ENCODE measurements at regions of chr10 and their contacts with region 1.

Region 1: GRCh38 chr10:24518981-24519597 is 204.6 kb downstream of the ARHGAP21 start:
- DNase-seq: peak; percentile 17
- H3K4me3 Mint-ChIP-seq: no peak overlapping the region
- H3K27ac Mint-ChIP-seq: peak overlapping the region; percentile 11
- H3K4me1 Mint-ChIP-seq: peaks cover 30% of the 10 kb centered on the region
- H3K27me3 Mint-ChIP-seq: peaks cover 4% of the 10 kb centered on the region

Region 2: DNA sequence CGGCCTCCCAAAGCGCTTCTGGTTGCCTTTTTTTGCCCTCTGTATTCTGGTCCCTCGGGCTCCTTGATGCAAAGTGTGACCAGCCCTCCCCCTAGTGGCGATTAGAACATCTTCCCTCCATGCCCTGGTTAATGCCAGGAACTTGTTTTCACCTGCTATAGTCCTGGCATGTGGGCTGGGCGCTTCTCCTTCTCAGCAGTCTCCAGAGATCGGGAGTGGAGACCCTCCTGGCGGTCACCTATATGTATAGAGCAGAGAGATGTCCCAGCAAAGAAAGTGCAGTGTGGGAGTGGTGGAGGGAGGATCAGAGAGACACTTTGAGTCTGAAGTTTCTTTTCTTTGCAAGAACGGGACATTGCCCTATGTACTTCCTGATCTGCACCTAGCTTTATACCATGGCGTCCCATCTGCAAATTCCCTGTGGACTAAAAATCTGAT is 816.1 kb before region 1 on chr10:
- intact Hi-C with region 1: loop called (anchors 10 kb)
- DNase-seq: peak; percentile 14
- H3K4me3 Mint-ChIP-seq: no peak overlapping the region
- H3K27ac Mint-ChIP-seq: no peak overlapping the region
- H3K4me1 Mint-ChIP-seq: no peaks in the 10 kb centered on the region
- H3K27me3 Mint-ChIP-seq: peaks cover 14% of the 10 kb centered on the region

Region 3: GRCh38 chr10:23994479-23995046 is 524.5 kb before region 1 on chr10:
- intact Hi-C with region 1: loop called (anchors 1 kb)
- DNase-seq: peak; percentile 5
- H3K4me3 Mint-ChIP-seq: no peak overlapping the region
- H3K27ac Mint-ChIP-seq: no peak overlapping the region
- H3K4me1 Mint-ChIP-seq: no peaks in the 10 kb centered on the region
- H3K27me3 Mint-ChIP-seq: no peaks in the 10 kb centered on the region

Region 4: GRCh38 chr10:24201503-24202180 is 317.4 kb before region 1 on chr10:
- intact Hi-C with region 1: loop called (anchors 2 kb)
- DNase-seq: no peak
- H3K4me3 Mint-ChIP-seq: no peak overlapping the region
- H3K27ac Mint-ChIP-seq: no peak overlapping the region
- H3K4me1 Mint-ChIP-seq: peaks cover 9% of the 10 kb centered on the region
- H3K27me3 Mint-ChIP-seq: peaks cover 22% of the 10 kb centered on the region

Region 5: GRCh38 chr10:24238519-24239252 is 280.4 kb before region 1 on chr10:
- intact Hi-C with region 1: no loop called
- DNase-seq: no peak
- H3K4me3 Mint-ChIP-seq: no peak overlapping the region
- H3K27ac Mint-ChIP-seq: no peak overlapping the region
- H3K4me1 Mint-ChIP-seq: no peaks in the 10 kb centered on the region
- H3K27me3 Mint-ChIP-seq: peaks cover 22% of the 10 kb centered on the region

Region 6: DNA sequence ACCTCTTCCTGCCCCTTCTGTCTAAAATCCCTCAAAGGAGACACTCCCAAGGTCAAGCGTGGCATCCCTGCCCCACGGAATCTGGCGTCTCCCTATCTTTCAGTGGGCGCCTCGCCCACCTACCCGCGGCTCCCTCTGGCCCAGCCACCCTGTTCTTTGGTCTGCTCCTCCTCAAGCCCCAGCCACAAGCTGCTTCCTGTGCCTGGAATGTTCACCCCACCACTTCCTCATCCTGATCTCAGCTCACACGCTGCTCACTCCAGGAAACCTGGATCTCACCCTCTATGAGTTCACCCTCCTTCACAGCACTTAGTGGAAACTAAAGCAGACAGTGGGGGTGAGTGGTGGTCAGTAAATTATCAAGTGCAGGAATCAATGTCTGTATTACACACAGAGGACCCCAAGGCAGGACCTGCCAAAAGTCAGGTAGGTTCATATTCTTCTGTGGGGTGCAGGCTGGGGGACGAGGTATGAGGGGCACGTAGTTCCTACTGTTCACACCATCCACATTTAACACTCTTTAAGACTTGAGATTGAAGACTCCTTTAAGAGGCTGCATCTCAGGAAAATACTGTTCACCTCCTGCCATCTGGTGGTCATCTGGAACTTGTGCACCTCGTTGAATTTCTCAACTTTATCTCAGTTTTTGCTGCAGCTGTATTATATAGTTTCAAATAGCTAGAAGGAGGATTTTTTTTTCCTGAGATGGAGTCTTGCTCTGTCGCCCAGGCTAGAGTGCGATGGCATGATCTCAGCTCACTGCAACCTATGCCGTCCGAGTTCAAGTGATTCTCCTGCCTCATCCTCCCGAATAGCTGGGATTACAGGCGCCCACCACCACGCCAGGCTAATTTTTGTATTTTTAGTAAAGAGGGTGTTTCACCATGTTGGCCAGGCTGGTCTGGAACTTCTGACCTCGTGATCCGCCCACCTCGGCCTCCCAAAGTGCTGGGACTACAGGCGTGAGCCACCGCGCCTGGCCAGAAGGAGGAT is 38.0 kb after region 1 on chr10:
- intact Hi-C with region 1: loop called (anchors 1 kb)
- DNase-seq: no peak
- H3K4me3 Mint-ChIP-seq: no peak overlapping the region
- H3K27ac Mint-ChIP-seq: no peak overlapping the region
- H3K4me1 Mint-ChIP-seq: peaks cover 6% of the 10 kb centered on the region
- H3K27me3 Mint-ChIP-seq: peaks cover 2% of the 10 kb centered on the region

Measured in activated T-helper 1 cell treated with anti-CD3 and anti-CD28 coated beads, Interleukin-12 subunit alpha, Interleukin-12 subunit beta, Interleukin-2, Interleukin-4 antibody, amounts not matched to agents 30 ng/mL and 10 ng/mL and 1 ng/mL, durations not matched to agents 14 hours and 24 hours and 36 hours (primary cell).